ENCODE measurements at regions of chr5 and their contacts with region 1.

Region 1: DNA sequence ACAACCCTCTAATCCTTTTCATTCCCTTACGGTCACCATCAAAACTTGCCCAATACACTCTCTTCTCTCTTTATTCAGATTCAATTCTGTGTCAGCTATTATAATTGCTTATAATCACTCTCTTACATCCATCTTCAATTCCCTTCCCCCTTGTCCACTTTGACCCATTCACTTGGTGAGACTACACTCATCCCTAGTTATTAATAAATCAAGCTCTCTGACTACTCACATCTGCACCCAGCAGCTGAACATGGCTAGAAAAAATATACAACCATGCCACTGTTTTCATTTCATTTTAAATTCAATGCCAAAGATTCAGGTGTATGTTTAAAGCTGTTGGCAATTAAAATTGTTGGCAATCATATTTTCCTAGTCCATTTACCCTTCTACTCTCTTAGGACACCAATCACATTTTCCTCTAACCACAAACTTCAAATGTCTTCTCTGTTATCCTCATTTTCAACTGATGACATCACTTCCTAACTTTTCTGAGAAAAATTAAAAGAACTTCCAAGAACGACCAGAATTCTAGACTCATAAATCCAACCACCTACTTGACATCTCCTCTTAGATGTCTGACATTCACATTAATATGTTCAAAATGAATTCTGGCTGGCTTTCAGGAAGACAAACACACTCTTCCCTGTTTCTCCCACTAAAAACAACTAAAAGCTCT is 5.5 kb downstream of the C5orf15 start:
- DNase-seq: no peak
- ATAC-seq: no peak
- H3K4me3 ChIP-seq: no peak overlapping the region
- H3K27ac ChIP-seq: no peak overlapping the region
- H3K4me1 ChIP-seq: peaks cover 4% of the 10 kb centered on the region
- H3K27me3 ChIP-seq: no peaks in the 10 kb centered on the region
- CTCF ChIP-seq: no peak
- EP300 ChIP-seq: no peak
- POLR2A ChIP-seq: no peak
- RAD21 ChIP-seq: no peak

Region 2: GRCh38 chr5:133467335-133467779 is 495.6 kb before region 1 on chr5:
- CTCF ChIA-PET with region 1: no interaction called
- POLR2A ChIA-PET with region 1: no interaction called
- RAD21 ChIA-PET with region 1: no interaction called
- SMC1A ChIA-PET with region 1: no interaction called
- in situ Hi-C with region 1: no loop called
- intact Hi-C with region 1: no loop called
- DNase-seq: no peak
- ATAC-seq: no peak
- H3K4me3 ChIP-seq: no peak overlapping the region
- H3K27ac ChIP-seq: no peak overlapping the region
- H3K4me1 ChIP-seq: no peaks in the 10 kb centered on the region
- H3K27me3 ChIP-seq: no peaks in the 10 kb centered on the region
- CTCF ChIP-seq: no peak
- EP300 ChIP-seq: no peak
- POLR2A ChIP-seq: no peak
- RAD21 ChIP-seq: no peak

Region 3: DNA sequence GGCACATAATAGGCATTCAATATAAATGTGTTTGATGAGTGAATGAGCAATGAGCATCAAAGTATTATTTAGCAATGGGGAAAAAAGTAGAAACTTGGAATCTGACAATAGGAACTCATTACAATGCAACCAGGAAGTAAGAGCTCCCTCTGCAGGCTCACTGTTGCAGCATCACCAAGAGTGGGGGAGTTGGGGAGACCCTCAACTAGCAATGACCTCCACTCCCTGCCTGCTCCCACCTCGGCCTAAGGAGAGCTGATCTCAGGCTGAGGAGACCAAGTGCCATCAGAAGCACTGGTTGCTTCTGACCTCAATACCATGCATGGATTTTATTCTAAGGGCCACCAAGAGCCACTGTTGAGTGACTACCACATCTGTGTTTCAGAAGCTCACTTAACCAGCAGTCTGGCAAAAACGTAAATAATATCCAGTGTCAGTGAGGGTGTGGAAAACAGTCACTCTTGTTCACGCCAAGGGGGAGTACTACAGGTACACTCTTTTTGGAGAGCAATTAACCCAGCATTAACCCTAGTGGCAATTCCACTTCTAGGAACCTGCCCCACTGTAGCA is 33.8 kb after region 1 on chr5:
- CTCF ChIA-PET with region 1: interaction called, 17 read pairs
- POLR2A ChIA-PET with region 1: interaction called, 4 read pairs
- RAD21 ChIA-PET with region 1: interaction called, 3 read pairs
- SMC1A ChIA-PET with region 1: interaction called, 3 read pairs
- in situ Hi-C with region 1: no loop called
- intact Hi-C with region 1: no loop called
- DNase-seq: no peak
- ATAC-seq: peak; percentile 53
- H3K4me3 ChIP-seq: peak overlapping the region; percentile 38; the same call in 1 of the 2 replicates
- H3K27ac ChIP-seq: no peak overlapping the region
- H3K4me1 ChIP-seq: peaks cover 25% of the 10 kb centered on the region
- H3K27me3 ChIP-seq: no peaks in the 10 kb centered on the region
- CTCF ChIP-seq: peak; percentile 67 to 72 (median 68)
- EP300 ChIP-seq: no peak
- POLR2A ChIP-seq: no peak
- RAD21 ChIP-seq: peak; percentile 33